AG04449 (cell line): ENCODE measurements at regions of chr18 and their contacts with region 1.

Region 1: GRCh38 chr18:7000484-7001096 is 117.0 kb downstream of the LAMA1 start:
- DNase-seq: no peak
- H3K4me3 ChIP-seq: no peak overlapping the region
- CTCF ChIP-seq: peak; percentile 33

Region 2: GRCh38 chr18:6687676-6688075 is 312.9 kb before region 1 on chr18:
- CTCF ChIA-PET with region 1: no interaction called
- POLR2A ChIA-PET with region 1: no interaction called
- DNase-seq: no peak
- H3K4me3 ChIP-seq: no peak overlapping the region
- CTCF ChIP-seq: no peak

Region 3: DNA sequence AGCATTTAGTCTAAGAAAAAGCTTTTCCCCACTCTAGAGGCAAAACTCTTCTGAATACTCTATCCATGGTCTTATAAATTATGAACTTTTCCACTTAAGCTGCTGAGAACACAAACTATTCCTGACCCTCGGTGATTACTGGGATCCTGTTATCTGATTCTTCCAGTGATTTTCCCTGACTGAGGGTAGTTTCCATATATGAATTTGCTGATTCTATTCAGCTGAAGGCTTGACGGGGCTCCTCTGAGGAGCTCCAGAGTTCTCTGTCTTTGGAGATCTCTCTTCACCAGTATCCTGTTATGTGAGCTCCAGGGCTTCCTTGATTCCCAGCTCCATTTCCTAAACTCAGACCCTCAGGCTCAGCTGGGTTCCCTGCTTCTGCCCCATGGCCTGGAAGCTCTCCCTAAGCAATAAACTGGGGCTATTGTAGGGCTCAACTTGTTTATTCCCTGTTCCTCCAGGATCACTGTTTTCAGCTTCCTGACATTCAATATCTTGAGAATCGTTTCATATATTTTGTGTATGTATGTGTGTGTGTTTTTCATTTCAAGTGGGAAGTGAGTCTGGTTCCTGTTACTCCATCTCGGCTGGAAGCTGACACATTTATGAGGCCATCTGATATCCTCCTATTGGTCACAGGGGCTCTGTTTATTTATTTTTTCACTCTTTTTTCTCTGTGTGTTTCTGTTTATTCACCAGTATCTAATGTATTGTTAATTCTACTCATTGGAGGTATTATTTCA is 192.9 kb before region 1 on chr18:
- CTCF ChIA-PET with region 1: no interaction called
- POLR2A ChIA-PET with region 1: no interaction called
- DNase-seq: no peak
- H3K4me3 ChIP-seq: no peak overlapping the region
- CTCF ChIP-seq: no peak

Region 4: DNA sequence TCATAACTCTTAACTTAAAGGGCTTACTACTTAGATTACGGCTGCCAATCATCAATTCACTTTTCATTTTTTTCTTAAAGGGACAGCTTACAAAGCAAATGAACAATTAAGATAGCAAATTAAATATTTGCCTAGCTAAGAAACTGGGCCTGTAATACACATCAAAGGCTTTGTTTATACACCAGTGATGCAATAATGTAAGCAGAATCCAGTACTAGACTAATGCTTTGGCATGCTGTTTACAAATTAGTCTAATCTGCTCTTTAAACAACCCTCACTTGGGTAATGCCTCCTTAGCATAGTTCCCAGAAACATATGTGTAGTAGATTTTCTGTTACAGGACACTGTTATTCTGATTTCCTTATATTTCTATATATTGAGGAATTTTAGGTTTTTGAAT is 165.2 kb before region 1 on chr18:
- CTCF ChIA-PET with region 1: no interaction called
- POLR2A ChIA-PET with region 1: no interaction called
- DNase-seq: no peak
- H3K4me3 ChIP-seq: no peak overlapping the region
- CTCF ChIP-seq: no peak

Region 5: GRCh38 chr18:6982398-6982797 is 18.2 kb before region 1 on chr18:
- CTCF ChIA-PET with region 1: interaction called, 10 read pairs
- POLR2A ChIA-PET with region 1: no interaction called
- DNase-seq: no peak
- H3K4me3 ChIP-seq: no peak overlapping the region
- CTCF ChIP-seq: no peak

Region 6: DNA sequence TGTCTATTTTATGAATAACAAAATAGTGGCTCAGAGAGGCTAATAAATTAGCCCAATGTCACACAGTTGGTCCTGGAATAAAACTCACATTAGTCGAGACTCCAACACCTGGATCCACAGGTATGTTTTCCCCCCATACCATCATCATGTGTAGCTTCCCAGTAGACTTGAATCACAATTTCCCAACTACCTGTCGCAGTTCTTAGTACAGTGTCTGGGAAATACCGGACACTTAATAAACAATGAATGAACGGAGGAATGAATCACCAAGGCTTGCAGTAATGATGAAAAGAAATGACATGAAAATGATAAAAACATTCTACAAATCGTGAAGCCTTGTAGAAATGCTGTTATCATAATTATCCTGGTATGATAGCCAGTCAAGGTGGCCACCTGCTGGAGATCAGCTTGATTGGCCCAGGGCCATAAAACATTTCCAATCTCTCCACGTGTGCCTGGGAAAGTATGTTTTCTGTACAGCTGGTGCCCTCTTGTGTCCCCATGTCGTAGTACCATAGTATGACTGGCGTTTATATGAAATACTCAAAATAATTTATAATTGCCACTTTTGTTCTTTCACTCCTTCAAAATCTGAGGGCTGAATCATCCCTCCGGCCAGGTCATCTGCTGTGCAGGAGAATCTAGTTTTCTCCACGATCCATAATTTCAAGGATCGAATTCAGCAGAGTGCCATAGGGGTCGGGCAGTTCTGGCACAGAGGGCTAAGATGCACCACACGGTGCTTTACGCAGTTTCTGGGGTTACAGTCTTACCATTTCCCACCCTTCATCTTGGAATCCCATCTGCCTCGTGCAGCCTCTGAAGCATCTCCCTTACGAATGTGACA is 21.6 kb after region 1 on chr18:
- CTCF ChIA-PET with region 1: no interaction called
- POLR2A ChIA-PET with region 1: no interaction called
- DNase-seq: no peak
- H3K4me3 ChIP-seq: no peak overlapping the region
- CTCF ChIP-seq: peak; percentile 10